ENCODE measurements at regions of chr1 and their contacts with region 1.

Region 1: DNA sequence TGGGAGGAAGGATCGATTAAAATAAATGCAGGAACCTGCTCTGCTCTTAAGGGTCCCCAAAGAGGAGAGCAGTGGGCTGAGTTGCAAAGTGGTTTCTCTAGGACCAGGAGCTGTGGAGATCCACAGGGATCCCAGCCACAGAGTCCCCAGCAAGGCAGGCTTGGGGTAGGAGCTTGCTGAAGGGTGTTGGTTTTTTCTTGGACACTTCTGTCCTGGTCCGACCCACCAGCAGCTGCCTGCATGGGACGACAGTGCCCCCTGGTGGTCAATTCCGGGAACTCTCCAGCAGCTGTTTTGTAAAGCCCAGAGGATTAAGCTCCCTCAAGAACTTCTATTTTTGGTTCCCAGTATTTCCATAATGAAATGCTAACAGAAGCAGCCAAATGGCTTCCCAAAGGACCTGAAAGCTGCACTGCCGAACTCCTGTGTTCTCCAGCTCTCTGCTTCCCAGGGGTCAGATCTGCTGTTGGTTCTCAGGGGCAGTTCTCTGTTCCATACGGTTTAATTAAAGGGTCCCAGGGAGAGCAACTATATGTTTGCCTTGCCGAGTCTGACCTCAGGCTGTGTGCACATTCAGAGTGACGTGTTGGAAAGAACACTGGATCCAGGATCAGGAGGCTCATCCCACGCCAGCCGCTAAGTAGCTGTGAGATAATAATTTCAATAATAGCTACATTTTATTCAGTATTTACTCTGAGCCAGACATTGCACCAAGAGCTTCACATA is 23.2 kb downstream of the NENF start:
- DNase-seq: peak; percentile 77 to 91 (median 86)
- ATAC-seq: peak; percentile 91
- H3K4me3 ChIP-seq: no peak overlapping the region
- H3K27ac ChIP-seq: no peak overlapping the region
- H3K4me1 ChIP-seq: peaks cover 3 to 8% of the 10 kb centered on the region in 2 donors
- H3K27me3 ChIP-seq: no peaks in the 10 kb centered on the region
- CTCF ChIP-seq: peak; percentile 95 to 98

Region 2: DNA sequence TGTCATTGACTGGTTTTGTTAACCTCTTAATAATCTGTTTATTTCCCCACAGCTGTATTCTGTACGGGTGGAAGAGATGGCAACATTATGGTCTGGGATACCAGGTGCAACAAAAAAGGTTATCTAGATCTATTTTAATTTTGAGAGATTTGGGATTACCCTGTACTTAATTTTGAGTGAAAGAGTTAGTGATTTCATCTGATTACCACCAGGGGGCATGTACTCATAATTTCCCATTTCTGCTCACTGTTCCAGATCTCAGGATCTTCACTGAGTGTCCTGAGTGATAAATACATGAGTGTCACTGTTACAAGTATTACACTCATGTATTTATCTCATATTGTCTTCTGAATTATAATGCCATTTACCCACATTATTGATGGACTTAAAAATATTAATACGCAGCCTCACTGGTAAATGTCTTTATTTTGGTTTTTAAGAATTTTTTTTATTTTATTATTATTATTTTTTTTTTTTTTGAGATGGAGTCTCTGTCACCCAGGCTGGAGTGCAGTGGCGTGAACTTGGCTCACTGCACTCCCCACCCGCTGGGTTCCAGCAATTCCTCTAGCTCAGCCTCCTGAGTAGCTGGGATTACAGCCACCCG is 393.0 kb before region 1 on chr1:
- intact Hi-C with region 1: loop called in 1 of 2 experiments (anchors 10 kb)
- DNase-seq: peak in 1 of 4 donors; percentile 28
- ATAC-seq: peak; percentile 76
- H3K4me3 ChIP-seq: no peak overlapping the region
- H3K27ac ChIP-seq: no peak overlapping the region
- H3K4me1 ChIP-seq: no peaks in the 10 kb centered on the region
- H3K27me3 ChIP-seq: no peaks in the 10 kb centered on the region
- CTCF ChIP-seq: peak; percentile 50 to 63